PC-9 (cell line): ENCODE measurements at regions of chr9 and their contacts with region 1.

Region 1: DNA sequence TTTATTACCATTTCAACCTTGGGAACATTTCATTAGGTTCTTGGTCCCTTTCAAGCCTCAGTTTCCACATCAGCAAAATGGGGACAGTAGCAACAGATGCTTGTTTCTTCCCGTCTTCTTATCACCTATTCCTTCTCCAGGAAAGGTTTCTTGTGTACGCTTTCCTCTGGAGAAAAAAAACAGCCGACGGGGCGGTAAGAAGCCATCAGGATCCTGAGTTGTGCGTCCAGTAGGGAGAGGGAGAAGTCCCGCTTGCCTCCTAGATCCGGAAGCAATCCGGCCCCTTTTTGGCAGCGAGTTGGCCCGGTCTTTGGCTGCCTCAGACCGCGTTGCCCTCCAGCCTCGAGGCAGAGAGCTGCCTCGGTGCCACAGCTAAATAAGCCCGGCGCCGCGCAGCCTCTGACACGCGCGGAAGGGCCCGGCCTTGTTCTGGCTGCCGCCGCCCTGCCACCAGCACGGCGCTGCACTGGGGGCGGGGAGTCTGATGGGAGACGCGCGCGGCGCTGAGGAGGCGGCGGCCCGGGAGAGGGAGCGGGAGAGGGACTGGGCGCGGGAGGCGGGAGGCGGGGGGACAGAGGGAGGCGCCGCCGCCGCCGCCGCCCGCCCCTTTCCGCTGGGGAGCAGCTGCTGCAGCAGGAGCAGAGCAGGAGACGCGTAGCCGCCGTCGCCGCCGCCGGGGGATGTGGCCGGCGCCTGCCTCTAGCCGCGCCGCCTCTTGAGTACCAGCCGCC is at the start of gene SLC44A1:
- DNase-seq: peak; percentile 84 to 99
- H3K4me3 ChIP-seq: peak within 1 kb of the TSS; percentile 97
- H3K27ac ChIP-seq: peak within 1 kb of the TSS; percentile 85
- H3K4me1 ChIP-seq: peaks cover 25% of the 10 kb centered on the region
- H3K27me3 ChIP-seq: no peaks in the 10 kb centered on the region
- CTCF ChIP-seq: no peak
- total RNA-seq, gene SLC44A1: 70.2 and 95.2 TPM in 2 replicates

Region 2: DNA sequence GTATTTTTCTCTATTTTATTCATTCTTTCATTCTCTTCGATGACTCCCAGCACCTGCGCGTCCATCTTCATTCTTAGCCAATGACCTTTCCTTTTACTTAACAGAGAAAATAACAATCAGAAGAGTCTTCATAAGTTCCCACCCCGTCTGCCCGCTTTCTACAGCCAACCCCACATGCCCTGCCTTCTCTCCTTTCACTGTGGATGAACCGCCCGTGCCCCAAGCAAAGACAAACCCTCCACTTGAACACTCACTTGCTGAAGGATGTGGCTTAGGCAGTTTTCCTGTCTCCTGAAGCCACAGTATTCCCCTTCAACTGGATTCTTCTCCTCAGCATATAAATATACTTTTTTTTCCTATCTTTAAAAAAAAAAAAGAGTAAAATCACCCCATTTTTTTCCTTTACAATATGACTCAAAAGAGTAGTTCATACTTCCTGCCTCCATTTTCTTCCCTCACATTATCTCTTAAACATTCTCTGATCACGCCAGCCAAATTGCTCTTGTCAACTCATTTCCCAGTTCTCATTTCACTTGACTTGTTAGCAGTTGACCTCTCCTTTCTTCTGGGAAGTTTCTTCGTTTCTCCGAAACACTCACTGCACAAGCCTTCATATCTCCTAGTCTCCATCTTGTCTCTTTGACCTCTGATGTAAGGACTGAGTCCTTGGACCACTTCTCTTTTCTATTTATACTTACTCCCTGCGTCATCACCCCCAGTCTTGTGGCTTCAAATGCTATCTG is 469.2 kb before region 1 on chr9:
- CTCF ChIA-PET with region 1: no interaction called
- POLR2A ChIA-PET with region 1: no interaction called
- intact Hi-C with region 1: loop called (anchors 10 kb)
- DNase-seq: no peak
- H3K4me3 ChIP-seq: no peak overlapping the region
- H3K27ac ChIP-seq: no peak overlapping the region
- H3K4me1 ChIP-seq: no peaks in the 10 kb centered on the region
- H3K27me3 ChIP-seq: no peaks in the 10 kb centered on the region
- CTCF ChIP-seq: no peak

Region 3: GRCh38 chr9:104927912-104928740 is 316.0 kb before region 1 on chr9 and contains the start of gene ABCA1:
- CTCF ChIA-PET with region 1: interaction called, 3 read pairs
- POLR2A ChIA-PET with region 1: interaction called, 4 read pairs
- intact Hi-C with region 1: loop called (anchors 1 kb)
- DNase-seq: peak; percentile 77
- H3K4me3 ChIP-seq: peak within 1 kb of the TSS; percentile 96
- H3K27ac ChIP-seq: peak within 1 kb of the TSS; percentile 84
- H3K4me1 ChIP-seq: peaks cover 28% of the 10 kb centered on the region
- H3K27me3 ChIP-seq: no peaks in the 10 kb centered on the region
- CTCF ChIP-seq: no peak
- total RNA-seq, gene ABCA1: 22.4 and 38.3 TPM in 2 replicates

Region 4: DNA sequence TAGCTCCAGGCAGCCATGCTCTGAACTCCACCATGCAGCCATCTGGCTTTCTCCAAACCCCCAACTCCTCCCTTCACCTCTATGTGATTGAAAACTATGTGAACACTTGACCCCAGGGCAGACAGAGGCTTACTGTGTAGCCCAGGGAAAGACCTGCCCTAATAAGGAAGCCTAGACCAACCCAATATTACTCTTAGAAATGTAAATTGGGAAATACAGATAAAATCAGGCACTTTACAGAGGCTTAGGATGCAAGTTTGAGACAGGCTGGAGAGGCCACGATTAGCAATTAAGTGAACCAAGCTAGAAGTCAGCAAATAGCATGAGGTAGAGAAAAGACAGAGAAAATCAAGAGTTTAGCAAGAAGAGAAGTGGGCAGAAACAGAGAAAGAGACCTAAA is 174.5 kb before region 1 on chr9:
- CTCF ChIA-PET with region 1: no interaction called
- POLR2A ChIA-PET with region 1: no interaction called
- intact Hi-C with region 1: loop called (anchors 2 kb)
- DNase-seq: peak in 1 of 2 experiments; percentile 59
- H3K4me3 ChIP-seq: no peak overlapping the region
- H3K27ac ChIP-seq: peak overlapping the region; percentile 89
- H3K4me1 ChIP-seq: peaks cover 44% of the 10 kb centered on the region
- H3K27me3 ChIP-seq: no peaks in the 10 kb centered on the region
- CTCF ChIP-seq: no peak

Region 5: GRCh38 chr9:105195259-105195658 is 48.9 kb before region 1 on chr9:
- CTCF ChIA-PET with region 1: no interaction called
- POLR2A ChIA-PET with region 1: no interaction called
- intact Hi-C with region 1: no loop called
- DNase-seq: no peak
- H3K4me3 ChIP-seq: no peak overlapping the region
- H3K27ac ChIP-seq: no peak overlapping the region
- H3K4me1 ChIP-seq: peaks cover 22% of the 10 kb centered on the region
- H3K27me3 ChIP-seq: no peaks in the 10 kb centered on the region
- CTCF ChIP-seq: no peak

Region 6: DNA sequence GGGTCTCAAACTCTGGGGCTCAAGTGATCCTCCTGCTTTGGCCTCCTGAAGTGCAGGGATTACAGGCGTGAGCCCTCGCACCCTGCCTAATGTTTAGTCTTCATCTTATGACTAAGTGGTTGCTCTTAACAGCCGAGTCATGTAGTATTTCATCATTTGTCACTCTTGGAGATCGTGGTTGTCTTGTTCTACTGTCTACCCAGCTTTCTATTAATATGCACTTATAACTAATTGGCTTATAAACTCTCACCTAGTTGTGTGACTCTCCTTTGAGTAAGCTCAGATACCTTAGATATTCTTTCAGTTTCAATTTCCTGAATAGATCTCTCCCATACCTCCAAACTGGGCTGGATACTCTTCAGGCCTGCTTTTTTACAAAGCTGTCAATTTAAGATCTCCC is 20.2 kb after region 1 on chr9:
- CTCF ChIA-PET with region 1: no interaction called
- POLR2A ChIA-PET with region 1: interaction called, 13 read pairs
- intact Hi-C with region 1: no loop called
- DNase-seq: peak in 1 of 2 experiments; percentile 71
- H3K4me3 ChIP-seq: no peak overlapping the region
- H3K27ac ChIP-seq: peak overlapping the region; percentile 69
- H3K4me1 ChIP-seq: peaks cover 12% of the 10 kb centered on the region
- H3K27me3 ChIP-seq: no peaks in the 10 kb centered on the region
- CTCF ChIP-seq: no peak

Region 7: DNA sequence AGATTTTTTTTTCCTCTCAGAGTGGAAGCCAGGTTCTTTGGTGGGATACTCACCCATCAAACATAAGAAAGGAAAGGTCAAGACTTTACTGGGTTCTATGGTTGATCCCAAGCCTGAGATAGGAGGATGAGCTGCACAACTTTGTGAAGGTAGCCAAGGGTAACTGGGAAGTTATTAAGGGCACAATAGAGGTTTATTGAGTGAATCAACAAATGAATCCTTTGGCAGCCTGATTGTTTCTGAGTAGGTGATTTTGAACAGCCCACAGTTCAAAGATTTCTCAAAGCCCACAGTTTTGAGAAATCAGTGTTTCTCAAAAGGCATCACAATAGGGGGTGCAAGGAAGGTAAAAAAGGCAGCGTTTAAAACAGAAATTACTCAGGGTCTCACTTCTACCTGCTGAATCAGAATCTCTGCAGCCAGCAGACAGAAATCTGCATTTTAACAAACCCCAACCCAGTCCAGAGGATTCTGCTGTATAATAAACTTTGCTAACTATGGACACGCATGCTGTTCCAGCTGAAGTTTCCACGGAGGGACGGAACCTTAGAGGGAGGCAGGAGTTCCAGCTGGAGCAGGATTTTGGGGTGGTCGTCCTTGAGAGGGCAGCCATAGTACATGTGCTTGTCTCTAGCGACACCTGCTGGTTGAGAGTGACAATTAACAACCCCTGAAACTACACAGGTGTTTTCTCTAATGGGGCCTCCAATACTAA is 170.9 kb after region 1 on chr9:
- CTCF ChIA-PET with region 1: interaction called, 3 read pairs
- POLR2A ChIA-PET with region 1: no interaction called
- intact Hi-C with region 1: loop called (anchors 1 kb)
- DNase-seq: peak in 1 of 2 experiments; percentile 45
- H3K4me3 ChIP-seq: no peak overlapping the region
- H3K27ac ChIP-seq: no peak overlapping the region
- H3K4me1 ChIP-seq: 0 out of 2 replicates have a peak, but pooled peaks cover 3% of the 10 kb centered on the region
- H3K27me3 ChIP-seq: no peaks in the 10 kb centered on the region
- CTCF ChIP-seq: peak; percentile 98